CD14-positive monocyte (primary cell): ENCODE measurements at regions of chr14 and their contacts with region 1.

Region 1: GRCh38 chr14:23567192-23568020 is at the start of gene AP1G2:
- DNase-seq: peak; percentile 60 to 73 (median 70)
- H3K4me3 ChIP-seq: peak within 1 kb of the TSS; percentile 51 to 94 (median 94)
- H3K4me3 Mint-ChIP-seq: peak within 1 kb of the TSS; percentile 100
- H3K27ac ChIP-seq: peak within 1 kb of the TSS; percentile 53 to 86
- H3K27ac Mint-ChIP-seq: peak within 1 kb of the TSS; percentile 91 to 95 (median 94)
- H3K4me1 ChIP-seq: peaks cover 57 to 73% of the 10 kb centered on the region in 2 donors
- H3K4me1 Mint-ChIP-seq: peaks cover 62% of the 10 kb centered on the region
- H3K27me3 ChIP-seq: no peaks in the 10 kb centered on the region
- H3K27me3 Mint-ChIP-seq: peaks cover 0 to 6% (median 0%) of the 10 kb centered on the region in 3 donors
- CTCF ChIP-seq: no peak
- polyA plus RNA-seq, gene AP1G2: 32.2 to 437 (median 37.0) TPM

Region 2: GRCh38 chr14:23464700-23465099 is 102.7 kb before region 1 on chr14:
- intact Hi-C with region 1: no loop called
- DNase-seq: no peak
- H3K4me3 ChIP-seq: no peak overlapping the region
- H3K4me3 Mint-ChIP-seq: no peak overlapping the region
- H3K27ac ChIP-seq: no peak overlapping the region
- H3K27ac Mint-ChIP-seq: no peak overlapping the region
- H3K4me1 ChIP-seq: peaks cover 0 to 6% of the 10 kb centered on the region in 2 donors
- H3K4me1 Mint-ChIP-seq: no peaks in the 10 kb centered on the region
- H3K27me3 ChIP-seq: no peaks in the 10 kb centered on the region
- H3K27me3 Mint-ChIP-seq: peaks cover 2 to 9% (median 8%) of the 10 kb centered on the region in 3 donors
- CTCF ChIP-seq: no peak

Region 3: GRCh38 chr14:23478111-23478759 is 89.2 kb before region 1 on chr14:
- intact Hi-C with region 1: loop called (anchors 1 to 5 kb)
- DNase-seq: peak; percentile 49 to 63 (median 57)
- H3K4me3 ChIP-seq: no peak overlapping the region
- H3K4me3 Mint-ChIP-seq: no peak overlapping the region
- H3K27ac ChIP-seq: no peak overlapping the region
- H3K27ac Mint-ChIP-seq: no peak overlapping the region
- H3K4me1 ChIP-seq: no peaks in the 10 kb centered on the region
- H3K4me1 Mint-ChIP-seq: no peaks in the 10 kb centered on the region
- H3K27me3 ChIP-seq: no peaks in the 10 kb centered on the region
- H3K27me3 Mint-ChIP-seq: no peaks in the 10 kb centered on the region
- CTCF ChIP-seq: peak; percentile 80